ENCODE measurements at regions of chr1 and their contacts with region 1.

Region 1: GRCh38 chr1:72037745-72038343 is 244.5 kb downstream of the NEGR1 start:
- DNase-seq: no peak
- ATAC-seq: peak; percentile 71
- H3K4me3 ChIP-seq: no peak overlapping the region
- H3K27ac ChIP-seq: no peak overlapping the region
- H3K4me1 ChIP-seq: no peaks in the 10 kb centered on the region
- H3K27me3 ChIP-seq: no peaks in the 10 kb centered on the region
- CTCF ChIP-seq: peak; percentile 42 to 58 (median 51); a peak in 5 of 6 replicates
- EP300 ChIP-seq: no peak
- POLR2A ChIP-seq: no peak
- RAD21 ChIP-seq: peak; percentile 49

Region 2: GRCh38 chr1:71080739-71081696 is 956.8 kb before region 1 on chr1 and contains the start of gene ZRANB2:
- CTCF ChIA-PET with region 1: no interaction called
- POLR2A ChIA-PET with region 1: no interaction called
- RAD21 ChIA-PET with region 1: no interaction called
- SMC1A ChIA-PET with region 1: no interaction called
- in situ Hi-C with region 1: loop called (anchors 25 kb)
- intact Hi-C with region 1: no loop called
- DNase-seq: peak; percentile 88
- ATAC-seq: peak; percentile 97
- H3K4me3 ChIP-seq: peak within 1 kb of the TSS; percentile 100
- H3K27ac ChIP-seq: peak within 1 kb of the TSS; percentile 97
- H3K4me1 ChIP-seq: no peaks in the 10 kb centered on the region
- H3K27me3 ChIP-seq: no peaks in the 10 kb centered on the region
- CTCF ChIP-seq: peak; percentile 54 to 64 (median 61)
- EP300 ChIP-seq: peak in 1 of 2 experiments; percentile 63
- POLR2A ChIP-seq: peak; percentile 95
- RAD21 ChIP-seq: no peak
- polyA plus RNA-seq, gene ZRANB2: 148 to 156 TPM

Region 3: DNA sequence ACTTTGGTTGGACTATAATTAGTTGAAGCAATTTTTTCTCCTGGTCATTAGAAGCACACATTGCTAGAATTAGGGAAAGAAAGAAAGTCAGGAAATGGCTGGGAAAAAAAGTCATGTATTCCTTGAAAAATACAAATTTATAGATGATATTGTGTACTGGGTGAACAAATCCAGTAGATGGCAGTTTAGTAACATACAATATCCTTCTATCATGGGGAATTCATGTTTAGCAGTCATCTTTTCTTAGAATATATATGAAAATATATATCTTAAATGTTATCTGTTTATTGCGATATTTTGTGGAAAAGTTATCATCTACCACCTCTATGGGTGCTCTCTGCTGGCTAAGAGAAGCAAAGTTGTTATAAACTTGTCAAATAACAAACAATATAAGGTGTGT is 943.9 kb before region 1 on chr1:
- CTCF ChIA-PET with region 1: interaction called, 10 read pairs
- POLR2A ChIA-PET with region 1: no interaction called
- RAD21 ChIA-PET with region 1: no interaction called
- SMC1A ChIA-PET with region 1: no interaction called
- in situ Hi-C with region 1: loop called (anchors 25 kb)
- intact Hi-C with region 1: loop called (anchors 5 kb)
- DNase-seq: no peak
- ATAC-seq: no peak
- H3K4me3 ChIP-seq: no peak overlapping the region
- H3K27ac ChIP-seq: no peak overlapping the region
- H3K4me1 ChIP-seq: no peaks in the 10 kb centered on the region
- H3K27me3 ChIP-seq: no peaks in the 10 kb centered on the region
- CTCF ChIP-seq: peak in 1 of 3 experiments; percentile 14; a peak in 2 of 6 replicates
- EP300 ChIP-seq: no peak
- POLR2A ChIP-seq: no peak
- RAD21 ChIP-seq: peak; percentile 32; the same call in 1 of the 2 replicates

Region 4: GRCh38 chr1:71196685-71197084 is 841.2 kb before region 1 on chr1:
- CTCF ChIA-PET with region 1: no interaction called
- POLR2A ChIA-PET with region 1: no interaction called
- RAD21 ChIA-PET with region 1: interaction called, 6 read pairs
- SMC1A ChIA-PET with region 1: interaction called, 3 read pairs
- in situ Hi-C with region 1: no loop called
- intact Hi-C with region 1: loop called (anchors 5 kb)
- DNase-seq: no peak
- ATAC-seq: no peak
- H3K4me3 ChIP-seq: no peak overlapping the region
- H3K27ac ChIP-seq: no peak overlapping the region
- H3K4me1 ChIP-seq: no peaks in the 10 kb centered on the region
- H3K27me3 ChIP-seq: no peaks in the 10 kb centered on the region
- CTCF ChIP-seq: no peak; a peak in 1 of 6 replicates
- EP300 ChIP-seq: no peak
- POLR2A ChIP-seq: no peak
- RAD21 ChIP-seq: no peak

Region 5: DNA sequence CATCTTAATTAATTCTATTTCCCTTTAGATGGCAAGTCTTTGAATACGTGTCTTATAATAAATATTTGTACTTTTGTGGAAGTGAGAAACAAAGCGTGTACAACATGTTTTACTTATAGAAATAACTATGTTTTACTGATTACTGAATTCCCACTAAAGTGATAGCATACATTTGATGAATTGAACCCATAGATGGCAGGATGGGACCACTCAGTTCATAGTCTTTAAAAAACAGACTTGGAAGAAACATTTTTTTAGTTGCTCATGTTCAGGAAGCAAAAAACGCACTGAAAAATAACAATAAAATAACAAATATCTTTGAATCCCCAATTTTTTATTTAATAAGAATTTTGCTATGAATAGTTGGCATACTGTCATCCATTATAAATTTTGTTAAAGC is 449.9 kb before region 1 on chr1:
- CTCF ChIA-PET with region 1: interaction called, 8 read pairs
- POLR2A ChIA-PET with region 1: no interaction called
- RAD21 ChIA-PET with region 1: interaction called, 4 read pairs
- SMC1A ChIA-PET with region 1: interaction called, 4 read pairs
- in situ Hi-C with region 1: loop called (anchors 25 kb)
- intact Hi-C with region 1: loop called (anchors 1 kb)
- DNase-seq: no peak
- ATAC-seq: no peak
- H3K4me3 ChIP-seq: no peak overlapping the region
- H3K27ac ChIP-seq: no peak overlapping the region
- H3K4me1 ChIP-seq: no peaks in the 10 kb centered on the region; the same call in 1 of the 2 replicates
- H3K27me3 ChIP-seq: no peaks in the 10 kb centered on the region
- CTCF ChIP-seq: peak in 1 of 3 experiments; percentile 31; a peak in 1 of 6 replicates
- EP300 ChIP-seq: no peak
- POLR2A ChIP-seq: no peak
- RAD21 ChIP-seq: peak; percentile 35; the same call in 1 of the 2 replicates

Region 6: GRCh38 chr1:72023063-72023930 is 14.5 kb before region 1 on chr1:
- CTCF ChIA-PET with region 1: interaction called, 16 read pairs
- POLR2A ChIA-PET with region 1: no interaction called
- RAD21 ChIA-PET with region 1: no interaction called
- SMC1A ChIA-PET with region 1: interaction called, 3 read pairs
- in situ Hi-C with region 1: no loop called
- intact Hi-C with region 1: no loop called
- DNase-seq: no peak
- ATAC-seq: no peak
- H3K4me3 ChIP-seq: no peak overlapping the region
- H3K27ac ChIP-seq: no peak overlapping the region
- H3K4me1 ChIP-seq: no peaks in the 10 kb centered on the region
- H3K27me3 ChIP-seq: no peaks in the 10 kb centered on the region
- CTCF ChIP-seq: no peak
- EP300 ChIP-seq: no peak
- POLR2A ChIP-seq: no peak
- RAD21 ChIP-seq: no peak

Measured in GM12878 (cell line).